ENCODE measurements at regions of chr3 and their contacts with region 1.

Region 1: DNA sequence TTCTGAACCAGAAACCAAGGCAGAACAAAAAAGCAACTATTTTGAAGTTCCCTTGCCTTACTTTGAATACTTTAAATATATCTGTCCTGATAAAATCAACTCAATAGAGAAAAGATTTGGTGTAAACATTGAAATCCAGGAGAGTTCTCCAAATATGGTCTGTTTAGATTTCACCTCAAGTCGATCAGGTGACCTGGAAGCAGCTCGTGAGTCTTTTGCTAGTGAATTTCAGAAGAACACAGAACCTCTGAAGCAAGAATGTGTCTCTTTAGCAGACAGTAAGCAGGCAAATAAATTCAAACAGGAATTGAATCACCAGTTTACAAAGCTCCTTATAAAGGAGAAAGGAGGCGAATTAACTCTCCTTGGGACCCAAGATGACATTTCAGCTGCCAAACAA is 4.6 kb downstream of the DTX3L start:
- DNase-seq: no peak
- H3K4me3 ChIP-seq: no peak overlapping the region
- CTCF ChIP-seq: no peak

Region 2: GRCh38 chr3:122508135-122508914 is 60.4 kb before region 1 on chr3:
- in situ Hi-C with region 1: loop called (anchors 5 kb)
- DNase-seq: no peak
- H3K4me3 ChIP-seq: no peak overlapping the region
- CTCF ChIP-seq: no peak

Region 3: DNA sequence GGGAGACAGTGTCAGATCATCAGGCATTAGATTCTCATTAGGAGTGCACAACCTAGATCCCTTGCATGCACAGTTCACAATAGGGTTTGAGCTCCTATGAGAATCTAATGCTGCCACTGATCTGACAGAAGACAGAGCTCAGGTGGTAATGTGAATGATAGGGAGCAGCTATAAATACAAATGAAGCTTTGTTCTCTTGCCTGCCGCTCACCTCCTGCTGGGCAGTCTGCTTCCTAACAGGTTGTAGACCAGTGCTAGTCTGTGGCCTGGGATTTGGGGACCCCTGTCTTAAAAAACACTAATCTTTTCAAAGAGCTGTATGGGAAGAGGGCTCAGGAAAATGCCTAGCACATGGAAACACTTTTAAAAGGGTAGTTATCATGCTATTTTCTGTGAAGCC is 61.0 kb after region 1 on chr3:
- in situ Hi-C with region 1: loop called (anchors 5 kb)
- DNase-seq: no peak
- H3K4me3 ChIP-seq: no peak overlapping the region
- CTCF ChIP-seq: no peak